ENCODE measurements at regions of chr2 and their contacts with region 1.

Region 1: DNA sequence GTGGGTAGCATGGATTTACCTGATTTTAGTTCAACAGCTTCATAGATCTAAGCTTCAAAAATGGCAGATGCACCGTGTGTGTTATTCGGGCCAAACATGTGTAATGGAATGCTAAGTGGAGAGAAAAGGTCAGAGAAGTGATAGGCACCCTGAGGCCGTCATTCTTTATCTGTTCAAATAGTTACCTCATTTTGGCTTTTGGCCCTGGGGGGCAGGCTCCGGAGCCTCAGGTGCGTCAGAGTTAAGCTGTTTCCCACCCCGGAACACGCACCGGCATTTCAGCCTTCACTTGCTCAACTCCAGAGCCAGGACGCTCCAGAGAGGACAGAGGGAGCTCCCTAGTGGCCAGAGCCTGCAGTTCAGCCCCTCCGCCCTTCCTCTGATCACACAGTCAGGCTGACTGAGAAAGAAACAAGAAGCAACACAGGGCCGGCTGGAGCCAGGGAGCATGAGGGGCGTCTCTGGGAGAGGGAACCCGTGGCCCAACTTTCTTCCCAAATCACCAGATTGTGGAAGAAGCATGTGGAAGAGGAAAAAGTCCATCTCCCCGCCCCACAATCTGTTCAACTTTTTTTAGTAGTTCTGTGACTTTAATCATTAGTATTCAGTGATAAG is 135.2 kb upstream of the EPC2 start:
- DNase-seq: peak; percentile 80 to 88 (median 83)
- H3K4me3 ChIP-seq: peak overlapping the region in 1 of 2 donors; percentile 45
- H3K4me3 Mint-ChIP-seq: peak overlapping the region; percentile 63 to 86 (median 82)
- H3K27ac ChIP-seq: peak overlapping the region; percentile 10
- H3K27ac Mint-ChIP-seq: peak overlapping the region; percentile 76 to 94 (median 88)
- H3K4me1 ChIP-seq: peaks cover 14% of the 10 kb centered on the region
- H3K4me1 Mint-ChIP-seq: peaks cover 9 to 23% (median 15%) of the 10 kb centered on the region in 4 donors
- H3K27me3 ChIP-seq: no peaks in the 10 kb centered on the region
- H3K27me3 Mint-ChIP-seq: no peaks in the 10 kb centered on the region

Region 2: DNA sequence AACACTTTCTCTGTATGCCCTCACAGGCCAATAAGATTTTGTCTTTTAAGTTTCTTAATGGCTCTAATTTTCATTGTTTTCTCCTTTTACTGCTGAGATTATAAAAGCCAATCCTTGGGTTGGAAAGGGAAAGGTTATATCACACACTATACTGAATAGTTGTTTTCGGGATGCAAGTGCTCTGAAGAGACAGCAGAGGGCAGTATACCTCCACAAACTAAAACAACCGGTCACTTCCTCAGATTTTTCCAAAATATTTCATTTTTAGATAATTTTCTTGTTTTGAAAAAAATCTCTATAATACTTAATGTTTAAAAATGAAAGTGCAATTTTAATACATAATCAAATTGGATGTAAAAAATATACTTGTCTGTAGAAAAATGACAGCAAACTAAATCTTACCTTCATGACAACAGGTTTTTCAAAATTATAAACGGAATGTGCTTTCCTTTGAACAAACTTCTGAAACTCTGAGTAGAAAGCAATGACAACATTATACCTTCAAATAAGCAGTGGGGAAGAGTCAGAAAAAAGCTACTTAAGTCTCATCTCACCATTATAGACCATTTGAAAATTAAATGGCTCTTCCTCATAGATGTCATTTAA is 571.5 kb before region 1 on chr2:
- CTCF ChIA-PET with region 1: interaction called, 40 read pairs
- POLR2A ChIA-PET with region 1: interaction called, 5 read pairs
- intact Hi-C with region 1: loop called (anchors 1 kb)
- DNase-seq: peak in 4 of 5 donors; percentile 23 to 37 (median 28)
- H3K4me3 ChIP-seq: no peak overlapping the region
- H3K4me3 Mint-ChIP-seq: no peak overlapping the region
- H3K27ac ChIP-seq: no peak overlapping the region
- H3K27ac Mint-ChIP-seq: peak overlapping the region in 1 of 7 donors; percentile 13
- H3K4me1 ChIP-seq: no peaks in the 10 kb centered on the region
- H3K4me1 Mint-ChIP-seq: peaks cover 0 to 1% (median 0%) of the 10 kb centered on the region in 4 donors
- H3K27me3 ChIP-seq: no peaks in the 10 kb centered on the region
- H3K27me3 Mint-ChIP-seq: no peaks in the 10 kb centered on the region

Region 3: DNA sequence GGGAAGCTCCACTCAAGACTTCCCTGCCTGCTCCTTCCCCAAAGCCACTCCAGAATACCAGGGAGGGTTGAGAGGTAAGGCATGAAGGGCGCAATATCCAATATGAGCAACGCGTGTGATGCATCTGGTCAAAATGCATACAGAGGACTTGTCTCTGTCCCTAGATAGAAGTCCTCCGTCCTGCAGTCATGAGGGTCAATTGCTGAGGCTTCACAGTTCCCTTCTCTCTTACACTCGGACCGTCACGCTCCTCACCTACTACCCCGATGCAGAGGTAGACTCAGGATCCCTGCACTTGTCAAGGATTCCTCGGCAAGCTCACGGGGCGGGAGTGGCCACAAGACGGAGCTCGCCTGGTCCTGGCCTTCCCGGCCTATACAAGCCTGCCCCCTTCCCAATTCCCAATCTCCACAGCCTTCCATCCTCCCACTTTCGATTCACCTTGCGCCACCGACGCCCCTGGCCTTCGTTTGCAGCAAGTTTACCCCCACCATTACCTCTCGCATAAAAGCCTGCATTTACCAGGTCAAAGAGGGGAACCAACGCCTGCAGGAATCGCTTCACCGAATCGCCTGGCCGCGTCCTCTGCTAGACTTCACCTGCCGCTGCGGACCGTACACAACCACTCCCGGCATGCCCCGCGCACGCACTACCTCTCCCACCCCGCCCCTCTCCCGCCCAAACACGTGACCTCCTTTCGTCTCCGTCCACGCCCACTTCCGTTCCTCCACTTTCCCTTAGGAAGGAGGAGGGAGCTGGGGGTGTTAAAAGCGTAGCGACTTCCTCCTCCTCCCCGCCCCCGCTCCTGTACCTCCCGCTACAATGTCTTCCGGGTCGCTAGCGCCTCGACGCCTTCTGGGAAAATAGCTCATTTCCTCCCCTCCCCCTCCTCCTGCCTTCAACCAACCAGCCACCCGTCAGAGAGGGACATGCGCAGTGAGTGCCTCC is 489.0 kb before region 1 on chr2 and contains the start of gene ORC4:
- CTCF ChIA-PET with region 1: interaction called, 11 read pairs
- POLR2A ChIA-PET with region 1: interaction called, 12 read pairs
- intact Hi-C with region 1: no loop called
- DNase-seq: peak; percentile 94 to 99 (median 97)
- H3K4me3 ChIP-seq: peak within 1 kb of the TSS; percentile 87 to 93
- H3K4me3 Mint-ChIP-seq: peak within 1 kb of the TSS; percentile 92 to 100 (median 99)
- H3K27ac ChIP-seq: peak within 1 kb of the TSS; percentile 89
- H3K27ac Mint-ChIP-seq: peak within 1 kb of the TSS; percentile 85 to 98 (median 97)
- H3K4me1 ChIP-seq: peaks cover 57% of the 10 kb centered on the region
- H3K4me1 Mint-ChIP-seq: peaks cover 44 to 83% (median 63%) of the 10 kb centered on the region in 4 donors
- H3K27me3 ChIP-seq: no peaks in the 10 kb centered on the region
- H3K27me3 Mint-ChIP-seq: no peaks in the 10 kb centered on the region
- total RNA-seq, gene ORC4: 59.4 to 60.1 TPM

Region 4: DNA sequence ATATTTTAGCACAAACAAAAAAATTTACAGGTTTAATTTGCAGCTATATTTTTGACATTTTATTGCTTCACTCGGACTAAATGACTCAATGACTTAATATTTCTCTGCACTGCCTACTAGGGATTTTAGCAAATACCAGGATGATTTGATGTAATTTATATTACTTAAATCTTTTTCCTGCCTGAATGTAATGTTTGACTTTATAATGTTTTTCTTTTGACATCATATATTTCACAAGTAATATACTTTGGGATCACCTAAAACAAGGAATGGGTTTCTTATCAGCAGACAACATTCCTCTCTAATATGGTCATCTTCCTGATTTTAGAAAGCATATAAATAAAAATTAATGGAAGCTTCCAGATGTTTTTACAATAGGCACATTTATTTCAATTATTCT is 118.1 kb before region 1 on chr2:
- CTCF ChIA-PET with region 1: no interaction called
- POLR2A ChIA-PET with region 1: no interaction called
- intact Hi-C with region 1: no loop called
- DNase-seq: no peak
- H3K4me3 ChIP-seq: no peak overlapping the region
- H3K4me3 Mint-ChIP-seq: no peak overlapping the region
- H3K27ac ChIP-seq: no peak overlapping the region
- H3K27ac Mint-ChIP-seq: no peak overlapping the region
- H3K4me1 ChIP-seq: no peaks in the 10 kb centered on the region
- H3K4me1 Mint-ChIP-seq: peaks cover 0 to 5% (median 1%) of the 10 kb centered on the region in 4 donors
- H3K27me3 ChIP-seq: no peaks in the 10 kb centered on the region
- H3K27me3 Mint-ChIP-seq: no peaks in the 10 kb centered on the region

Region 5: DNA sequence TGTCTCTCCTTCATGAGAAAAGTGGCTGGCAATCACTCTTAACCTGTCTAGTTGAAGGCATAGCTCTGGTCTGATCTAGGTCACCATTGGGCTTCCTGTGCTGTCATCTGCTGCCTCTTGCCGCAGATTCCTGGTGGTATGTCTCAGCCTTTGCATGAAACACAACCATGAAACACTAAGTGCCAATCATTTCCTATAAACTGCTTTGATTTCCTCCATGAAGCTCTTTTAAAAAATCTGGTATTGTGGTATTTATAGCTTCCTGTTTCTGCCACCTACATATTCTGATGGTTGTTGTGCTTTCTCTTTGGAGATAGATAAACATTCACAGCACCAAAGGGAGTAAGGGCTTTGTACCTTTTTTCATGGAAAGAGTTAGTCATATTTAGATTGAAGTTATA is 15.1 kb after region 1 on chr2:
- CTCF ChIA-PET with region 1: interaction called, 78 read pairs
- POLR2A ChIA-PET with region 1: interaction called, 42 read pairs
- intact Hi-C with region 1: loop called (anchors 1 kb)
- DNase-seq: peak; percentile 79 to 90 (median 87)
- H3K4me3 ChIP-seq: peak overlapping the region in 1 of 2 donors; percentile 26
- H3K4me3 Mint-ChIP-seq: peak overlapping the region; percentile 22 to 89 (median 72)
- H3K27ac ChIP-seq: peak overlapping the region; percentile 60
- H3K27ac Mint-ChIP-seq: peak overlapping the region; percentile 85 to 99 (median 95)
- H3K4me1 ChIP-seq: peaks cover 92% of the 10 kb centered on the region
- H3K4me1 Mint-ChIP-seq: peaks cover 74 to 90% (median 84%) of the 10 kb centered on the region in 4 donors
- H3K27me3 ChIP-seq: no peaks in the 10 kb centered on the region
- H3K27me3 Mint-ChIP-seq: no peaks in the 10 kb centered on the region

Region 6: DNA sequence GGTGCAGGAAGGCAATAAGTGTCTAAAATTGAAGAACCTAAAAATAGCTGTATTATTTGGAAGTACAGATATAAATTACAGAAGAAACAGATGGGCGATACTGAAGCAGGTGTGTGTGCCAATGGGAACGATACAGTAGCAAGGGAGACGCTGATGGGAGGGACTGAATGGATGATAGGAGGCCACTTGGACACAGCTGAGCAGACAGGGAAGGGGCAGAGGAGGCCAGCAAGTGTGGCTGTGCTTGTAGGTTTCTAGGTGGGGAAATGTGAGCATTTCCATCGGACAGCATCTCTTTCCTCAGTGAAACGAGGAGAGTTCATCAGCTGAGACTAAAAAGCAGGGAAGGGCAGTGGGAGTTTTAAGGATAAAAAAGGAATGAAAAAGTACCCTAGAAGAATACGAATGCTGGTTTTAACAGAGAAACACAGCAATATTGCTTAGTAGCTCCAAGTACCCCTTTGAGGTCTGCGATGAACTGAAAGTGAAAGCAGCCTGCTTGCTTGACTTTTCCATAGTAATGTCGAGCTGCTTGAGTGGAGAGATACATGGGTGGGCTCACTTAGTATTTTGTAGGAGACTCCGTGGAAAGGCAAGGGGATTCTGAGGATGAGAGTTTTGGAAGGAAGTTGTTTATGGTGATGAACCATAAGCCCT is 43.4 kb after region 1 on chr2:
- CTCF ChIA-PET with region 1: interaction called, 13 read pairs
- POLR2A ChIA-PET with region 1: interaction called, 25 read pairs
- intact Hi-C with region 1: loop called (anchors 5 kb)
- DNase-seq: peak; percentile 43 to 58 (median 54)
- H3K4me3 ChIP-seq: peak overlapping the region; percentile 62 to 67
- H3K4me3 Mint-ChIP-seq: no peak overlapping the region
- H3K27ac ChIP-seq: peak overlapping the region; percentile 61
- H3K27ac Mint-ChIP-seq: no peak overlapping the region
- H3K4me1 ChIP-seq: peaks cover 17% of the 10 kb centered on the region
- H3K4me1 Mint-ChIP-seq: peaks cover 0 to 5% (median 3%) of the 10 kb centered on the region in 4 donors
- H3K27me3 ChIP-seq: no peaks in the 10 kb centered on the region
- H3K27me3 Mint-ChIP-seq: no peaks in the 10 kb centered on the region

Region 7: GRCh38 chr2:148989882-148990493 is 480.6 kb after region 1 on chr2:
- CTCF ChIA-PET with region 1: interaction called, 8 read pairs
- POLR2A ChIA-PET with region 1: no interaction called
- intact Hi-C with region 1: loop called (anchors 5 kb)
- DNase-seq: peak; percentile 53 to 64 (median 59)
- H3K4me3 ChIP-seq: no peak overlapping the region
- H3K4me3 Mint-ChIP-seq: no peak overlapping the region
- H3K27ac ChIP-seq: no peak overlapping the region
- H3K27ac Mint-ChIP-seq: peak overlapping the region in 2 of 7 donors; percentile 31 to 46
- H3K4me1 ChIP-seq: no peaks in the 10 kb centered on the region
- H3K4me1 Mint-ChIP-seq: peaks cover 2 to 6% (median 3%) of the 10 kb centered on the region in 4 donors
- H3K27me3 ChIP-seq: no peaks in the 10 kb centered on the region
- H3K27me3 Mint-ChIP-seq: no peaks in the 10 kb centered on the region